AG04450 (cell line): ENCODE measurements at regions of chr1 and their contacts with region 1.

Region 1: GRCh38 chr1:150281837-150282653 is at the start of gene CIART:
- DNase-seq: peak; percentile 98
- H3K4me3 ChIP-seq: peak within 1 kb of the TSS; percentile 77
- H3K27ac ChIP-seq: peak within 1 kb of the TSS; percentile 77
- H3K27me3 ChIP-seq: no peaks in the 10 kb centered on the region
- CTCF ChIP-seq: no peak
- polyA plus RNA-seq, gene CIART: 8.6 and 9.4 TPM in 2 replicates

Region 2: DNA sequence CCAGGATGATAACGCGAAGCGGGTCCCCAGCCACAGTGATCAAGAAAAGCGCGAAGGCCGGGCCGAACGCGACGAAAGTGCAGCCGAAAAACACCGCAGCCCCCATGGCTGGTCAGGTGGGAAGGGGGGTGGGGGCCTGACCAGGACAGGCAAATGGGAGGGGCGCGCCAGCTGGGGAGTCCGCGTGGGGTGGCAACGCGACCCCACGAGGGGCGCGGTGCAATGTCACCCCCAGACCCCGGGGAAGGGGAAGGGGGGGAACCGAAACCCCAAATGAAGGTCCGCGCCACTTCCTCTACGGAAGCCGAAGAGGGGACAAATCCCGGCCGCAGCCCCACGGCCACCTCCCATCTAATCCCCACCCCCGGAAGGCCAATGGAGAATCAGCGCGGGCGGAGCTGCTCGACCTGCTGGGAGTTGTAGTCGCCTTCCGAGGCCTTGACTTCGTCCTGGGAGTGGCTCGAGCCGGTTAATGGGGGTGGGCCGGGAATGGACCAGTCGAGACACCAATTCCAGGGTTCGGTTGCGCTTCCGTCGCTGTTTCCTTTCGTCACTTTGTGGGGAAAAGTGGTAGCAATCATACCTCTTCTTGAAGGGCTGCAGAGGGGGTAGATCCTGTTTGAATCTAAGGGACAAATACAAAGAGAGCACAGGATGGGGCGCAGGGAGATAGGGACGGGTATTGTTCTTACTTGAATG is 13.2 kb before region 1 on chr1 and contains the start of gene APH1A:
- CTCF ChIA-PET with region 1: interaction called, 44 read pairs
- POLR2A ChIA-PET with region 1: interaction called, 6 read pairs
- DNase-seq: peak; percentile 91
- H3K4me3 ChIP-seq: peak within 1 kb of the TSS; percentile 95
- H3K27ac ChIP-seq: peak within 1 kb of the TSS; percentile 70
- H3K27me3 ChIP-seq: no peaks in the 10 kb centered on the region
- CTCF ChIP-seq: no peak
- polyA plus RNA-seq, gene APH1A: 117 and 121 TPM in 2 replicates